Prostate gland (tissue), 2 donors: ENCODE measurements at regions of chr10 and their contacts with region 1.

Region 1: DNA sequence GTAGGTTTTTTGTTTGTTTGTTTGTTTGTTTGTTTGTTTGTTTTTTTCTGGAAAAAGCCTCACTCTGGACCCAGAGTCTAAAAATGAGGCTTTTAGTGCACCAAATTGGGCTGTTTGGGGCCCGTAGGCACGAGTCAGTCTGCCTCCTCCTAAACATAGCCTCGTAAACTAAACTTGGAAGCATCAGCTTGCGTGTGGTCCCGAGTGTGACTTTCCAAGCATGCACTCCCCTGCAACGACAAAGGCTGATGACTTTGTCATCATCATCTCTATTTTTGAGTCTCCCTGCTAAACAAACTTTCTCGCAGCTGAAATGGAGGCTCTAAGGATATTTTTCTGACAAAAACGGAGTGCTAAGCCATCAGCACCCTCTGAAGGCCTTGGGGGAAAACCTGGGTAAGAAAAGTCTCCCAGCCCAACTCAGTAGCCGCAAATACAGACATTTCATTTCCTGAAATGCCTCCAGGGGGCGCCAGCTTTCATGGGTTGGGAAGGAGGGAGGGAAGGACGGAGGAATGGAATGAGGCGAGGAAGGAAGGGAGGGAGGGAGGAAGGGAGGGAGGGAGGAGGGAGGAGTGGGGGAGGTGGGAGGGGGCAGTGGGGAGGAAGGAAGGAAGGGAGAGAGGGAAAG is 245.9 kb downstream of the KCNMA1 start:
- DNase-seq: peak; percentile 61
- H3K4me3 ChIP-seq: no peak overlapping the region
- H3K27ac ChIP-seq: peak overlapping the region; percentile 54 to 58
- H3K4me1 ChIP-seq: no peaks in the 10 kb centered on the region
- H3K27me3 ChIP-seq: no peaks in the 10 kb centered on the region
- CTCF ChIP-seq: peak; percentile 50 to 72 (median 65)
- POLR2A ChIP-seq: no peak

Region 2: DNA sequence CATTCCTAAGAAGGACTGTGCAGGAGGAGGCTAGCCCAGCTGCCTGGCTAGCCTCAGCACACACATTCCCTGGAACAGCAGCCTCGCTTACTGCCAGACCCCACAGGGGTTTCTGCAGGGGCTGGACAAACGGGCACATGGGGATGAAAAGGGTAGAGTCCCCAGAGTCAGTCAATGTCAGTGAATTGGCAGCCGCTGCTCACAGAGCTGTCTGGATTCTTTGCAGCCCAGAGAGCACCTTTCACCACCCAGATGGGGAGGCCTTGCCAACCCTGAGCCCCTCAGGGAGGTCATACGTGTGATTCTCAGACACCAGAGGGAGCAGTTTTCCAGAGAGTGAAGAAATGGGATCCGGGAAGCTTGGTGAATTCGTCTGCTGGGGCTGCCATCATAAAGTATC is 102.6 kb after region 1 on chr10:
- intact Hi-C with region 1: loop called (anchors 5 kb)
- DNase-seq: no peak
- H3K4me3 ChIP-seq: no peak overlapping the region
- H3K27ac ChIP-seq: peak overlapping the region; percentile 44 to 46
- H3K4me1 ChIP-seq: peaks cover 4% of the 10 kb centered on the region
- H3K27me3 ChIP-seq: no peaks in the 10 kb centered on the region
- CTCF ChIP-seq: peak in 3 of 4 experiments; percentile 31 to 50 (median 31)
- POLR2A ChIP-seq: no peak

Region 3: GRCh38 chr10:77592946-77593636 is 201.4 kb after region 1 on chr10:
- intact Hi-C with region 1: loop called (anchors 2 kb)
- DNase-seq: no peak
- H3K4me3 ChIP-seq: no peak overlapping the region
- H3K27ac ChIP-seq: no peak overlapping the region
- H3K4me1 ChIP-seq: no peaks in the 10 kb centered on the region
- H3K27me3 ChIP-seq: no peaks in the 10 kb centered on the region
- CTCF ChIP-seq: no peak
- POLR2A ChIP-seq: no peak